MCF 10A (cell line): ENCODE measurements at regions of chr7 and their contacts with region 1.

Region 1: DNA sequence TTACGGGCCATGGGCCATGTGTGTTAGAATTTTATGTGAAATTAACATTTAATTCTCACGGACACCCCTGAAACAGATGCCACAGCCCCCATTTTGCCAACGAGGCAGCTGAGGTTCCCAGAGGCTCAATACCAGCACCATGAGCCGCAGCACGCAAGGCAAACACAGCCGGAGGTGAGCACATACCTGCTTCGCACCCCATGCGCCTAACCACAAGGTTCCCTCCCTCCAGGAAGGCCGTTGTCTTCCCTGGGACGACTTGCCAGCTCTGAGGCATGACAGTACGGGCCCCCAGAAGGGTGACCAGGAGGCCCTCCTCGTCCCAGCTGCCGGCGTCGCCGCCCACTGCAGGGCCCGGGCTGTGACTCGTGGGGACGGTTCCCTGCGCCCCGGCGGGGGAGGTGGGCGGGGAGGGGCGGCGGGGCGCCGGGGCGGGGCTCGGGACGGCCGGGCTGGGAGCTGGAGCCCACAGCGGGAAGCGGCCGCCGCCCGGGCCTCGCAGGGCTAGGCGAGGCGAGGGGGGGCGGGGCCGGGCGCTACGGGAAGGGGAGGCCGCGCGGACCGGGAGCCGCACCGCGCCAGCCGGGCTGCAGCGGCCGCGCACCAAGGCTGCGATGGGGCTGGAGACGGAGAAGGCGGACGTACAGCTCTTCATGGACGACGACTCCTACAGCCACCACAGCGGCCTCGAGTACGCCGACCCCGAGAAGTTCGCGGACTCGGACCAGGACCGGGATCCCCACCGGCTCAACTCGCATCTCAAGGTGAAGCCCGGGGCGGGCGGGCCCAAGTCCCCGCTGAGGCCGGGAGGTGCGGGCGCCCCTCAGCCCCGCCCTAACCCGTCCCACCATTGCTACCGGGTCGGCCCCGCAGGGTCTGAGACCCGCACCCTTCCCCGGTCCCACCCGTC is at the start of gene CAV2:
- DNase-seq: peak; percentile 86
- H3K4me3 Mint-ChIP-seq: peak within 1 kb of the TSS; percentile 87
- H3K27ac Mint-ChIP-seq: peak within 1 kb of the TSS; percentile 90
- H3K4me1 Mint-ChIP-seq: peaks cover 32% of the 10 kb centered on the region
- H3K27me3 Mint-ChIP-seq: no peaks in the 10 kb centered on the region
- CTCF ChIP-seq: no peak
- total RNA-seq, gene CAV2: 155 and 171 TPM in 2 replicates

Region 2: GRCh38 chr7:116271963-116272839 is 227.2 kb before region 1 on chr7:
- CTCF ChIA-PET with region 1: interaction called, 5 read pairs
- POLR2A ChIA-PET with region 1: interaction called, 19 read pairs
- intact Hi-C with region 1: no loop called
- DNase-seq: peak; percentile 96
- H3K4me3 Mint-ChIP-seq: peak overlapping the region; percentile 58
- H3K27ac Mint-ChIP-seq: peak overlapping the region; percentile 82
- H3K4me1 Mint-ChIP-seq: peaks cover 47% of the 10 kb centered on the region
- H3K27me3 Mint-ChIP-seq: no peaks in the 10 kb centered on the region
- CTCF ChIP-seq: no peak

Region 3: GRCh38 chr7:116354546-116355408 is 144.6 kb before region 1 on chr7:
- CTCF ChIA-PET with region 1: interaction called, 5 read pairs
- POLR2A ChIA-PET with region 1: interaction called, 7 read pairs
- intact Hi-C with region 1: loop called (anchors 1 kb)
- DNase-seq: peak; percentile 91
- H3K4me3 Mint-ChIP-seq: peak overlapping the region; percentile 69
- H3K27ac Mint-ChIP-seq: peak overlapping the region; percentile 98
- H3K4me1 Mint-ChIP-seq: peaks cover 42% of the 10 kb centered on the region
- H3K27me3 Mint-ChIP-seq: no peaks in the 10 kb centered on the region
- CTCF ChIP-seq: no peak

Region 4: GRCh38 chr7:116455009-116455408 is 44.4 kb before region 1 on chr7:
- CTCF ChIA-PET with region 1: interaction called, 3 read pairs
- POLR2A ChIA-PET with region 1: interaction called, 4 read pairs
- intact Hi-C with region 1: loop called (anchors 5 kb)
- DNase-seq: peak; percentile 49
- H3K4me3 Mint-ChIP-seq: no peak overlapping the region
- H3K27ac Mint-ChIP-seq: peak overlapping the region; percentile 61
- H3K4me1 Mint-ChIP-seq: peaks cover 14% of the 10 kb centered on the region
- H3K27me3 Mint-ChIP-seq: no peaks in the 10 kb centered on the region
- CTCF ChIP-seq: no peak

Region 5: GRCh38 chr7:116576350-116577319 is 77.2 kb after region 1 on chr7:
- CTCF ChIA-PET with region 1: interaction called, 3 read pairs
- POLR2A ChIA-PET with region 1: interaction called, 11 read pairs
- intact Hi-C with region 1: no loop called
- DNase-seq: peak; percentile 70
- H3K4me3 Mint-ChIP-seq: no peak overlapping the region
- H3K27ac Mint-ChIP-seq: peak overlapping the region; percentile 51
- H3K4me1 Mint-ChIP-seq: peaks cover 34% of the 10 kb centered on the region
- H3K27me3 Mint-ChIP-seq: no peaks in the 10 kb centered on the region
- CTCF ChIP-seq: no peak

Region 6: GRCh38 chr7:117395743-117396142 is 896.3 kb after region 1 on chr7:
- CTCF ChIA-PET with region 1: no interaction called
- POLR2A ChIA-PET with region 1: no interaction called
- intact Hi-C with region 1: no loop called
- DNase-seq: no peak
- H3K4me3 Mint-ChIP-seq: no peak overlapping the region
- H3K27ac Mint-ChIP-seq: no peak overlapping the region
- H3K4me1 Mint-ChIP-seq: no peaks in the 10 kb centered on the region
- H3K27me3 Mint-ChIP-seq: peaks cover 84% of the 10 kb centered on the region
- CTCF ChIP-seq: no peak